ENCODE measurements at regions of chr21 and their contacts with region 1.

Region 1: GRCh38 chr21:45011911-45012660 is 62.3 kb upstream of the ADARB1 start:
- DNase-seq: peak; percentile 78
- H3K4me3 ChIP-seq: no peak overlapping the region
- H3K27ac ChIP-seq: peak overlapping the region; percentile 77
- H3K4me1 ChIP-seq: peaks cover 22% of the 10 kb centered on the region
- H3K27me3 ChIP-seq: no peaks in the 10 kb centered on the region
- CTCF ChIP-seq: peak; percentile 28 to 50
- POLR2A ChIP-seq: no peak

Region 2: DNA sequence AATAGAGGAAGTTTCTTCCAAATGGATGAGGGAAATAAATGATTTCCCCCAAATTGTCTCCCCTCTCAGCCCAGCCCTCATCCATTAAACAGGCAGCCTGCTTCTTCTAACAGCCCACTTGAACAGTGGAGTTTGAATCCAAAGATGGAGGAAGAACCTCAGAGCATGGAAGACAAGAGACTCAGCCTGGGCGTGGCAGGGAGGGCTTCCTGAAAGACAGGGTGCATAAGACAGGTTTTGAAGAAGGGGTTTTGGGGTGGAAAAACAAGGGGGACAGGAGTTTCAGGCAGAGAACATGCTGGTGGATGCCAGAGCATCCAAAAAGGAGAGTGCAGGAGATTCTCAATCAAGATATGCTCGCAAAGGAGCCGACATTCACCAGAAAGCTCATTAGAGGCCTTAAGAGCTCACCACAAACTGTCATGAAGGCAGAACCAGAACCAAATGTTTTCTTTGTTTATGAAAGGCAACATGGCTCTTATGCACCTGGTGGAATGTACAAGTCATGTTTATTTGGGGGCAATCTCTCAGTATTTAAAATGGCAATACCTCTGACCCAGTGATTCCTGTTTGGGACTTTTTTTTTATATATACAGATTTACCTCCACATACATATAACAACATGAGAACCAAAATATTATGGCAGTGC is 274.3 kb before region 1 on chr21:
- CTCF ChIA-PET with region 1: no interaction called
- POLR2A ChIA-PET with region 1: no interaction called
- dilution Hi-C with region 1: no loop called
- intact Hi-C with region 1: no loop called
- DNase-seq: no peak
- H3K4me3 ChIP-seq: no peak overlapping the region
- H3K27ac ChIP-seq: no peak overlapping the region
- H3K4me1 ChIP-seq: no peaks in the 10 kb centered on the region
- H3K27me3 ChIP-seq: peaks cover 5 to 9% of the 10 kb centered on the region in 2 experiments
- CTCF ChIP-seq: no peak
- POLR2A ChIP-seq: no peak

Region 3: DNA sequence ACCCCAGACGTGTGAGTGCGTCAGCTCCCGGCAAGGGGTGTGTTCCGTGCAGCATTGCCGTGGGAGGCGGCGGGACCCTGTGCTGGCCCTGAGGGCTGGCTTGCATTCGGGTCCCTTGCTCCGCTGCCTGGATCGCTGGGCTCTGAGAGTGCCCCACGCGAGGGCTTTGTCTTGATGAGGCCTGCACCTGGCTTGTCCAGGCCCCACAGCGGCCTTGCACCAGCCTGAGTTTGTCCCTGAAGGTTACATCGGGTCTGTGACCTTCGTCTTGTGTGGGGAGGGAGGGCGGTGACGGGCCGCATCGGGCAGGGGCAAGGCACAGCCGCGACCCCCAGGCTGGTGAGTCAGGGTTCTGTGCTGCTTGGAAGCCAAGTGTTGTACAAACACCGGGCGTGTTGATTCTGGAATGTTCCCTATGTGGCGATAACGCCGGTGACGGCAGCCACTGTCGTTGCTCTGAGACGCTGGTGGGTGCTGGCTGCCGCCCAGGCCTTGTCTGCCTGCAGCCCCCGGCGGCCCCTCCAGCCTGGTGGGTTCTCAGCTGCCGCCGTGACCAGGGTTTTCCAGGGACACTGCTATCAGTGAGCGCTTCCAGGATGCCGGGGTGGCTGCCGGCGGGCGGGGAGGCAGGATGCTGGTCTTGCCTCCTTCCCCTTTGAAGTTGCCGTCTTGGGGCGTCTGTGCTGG is 29.4 kb before region 1 on chr21:
- CTCF ChIA-PET with region 1: no interaction called
- POLR2A ChIA-PET with region 1: no interaction called
- dilution Hi-C with region 1: no loop called
- intact Hi-C with region 1: loop called (anchors 2 kb)
- DNase-seq: peak; percentile 74
- H3K4me3 ChIP-seq: no peak overlapping the region
- H3K27ac ChIP-seq: peak overlapping the region; percentile 51
- H3K4me1 ChIP-seq: peaks cover 12% of the 10 kb centered on the region
- H3K27me3 ChIP-seq: no peaks in the 10 kb centered on the region
- CTCF ChIP-seq: no peak
- POLR2A ChIP-seq: no peak

Region 4: DNA sequence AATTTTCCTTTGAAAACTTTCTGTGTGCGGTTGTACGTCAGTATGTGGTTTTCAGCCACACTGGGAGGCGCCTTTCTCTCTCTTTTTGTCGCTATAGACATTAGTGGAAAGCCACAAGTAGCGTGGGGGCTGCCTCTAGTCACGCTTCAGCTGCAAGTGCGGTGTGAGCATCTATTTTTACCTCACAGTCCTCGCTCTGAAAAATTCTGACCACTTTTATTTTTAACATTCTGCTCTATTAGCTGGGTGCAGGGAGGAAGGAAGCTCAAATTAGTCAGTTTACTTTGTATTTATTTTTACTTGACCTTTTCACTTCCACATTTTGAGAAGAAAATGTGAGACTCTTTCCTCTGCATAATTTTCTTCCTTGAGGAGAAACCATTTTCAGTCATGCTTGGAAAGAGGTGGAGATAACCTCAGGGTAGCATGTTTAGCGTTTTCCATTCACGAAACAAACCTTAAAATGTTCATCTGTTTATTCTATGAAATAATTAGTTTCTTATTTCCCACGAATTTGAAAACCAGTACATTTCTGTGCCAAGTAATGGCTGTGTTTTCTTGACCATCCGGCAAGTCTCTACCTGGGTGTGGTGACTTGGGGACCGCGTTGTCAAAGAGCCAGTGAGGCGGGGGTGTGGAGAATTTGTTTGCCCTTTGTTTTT is 97.9 kb after region 1 on chr21:
- CTCF ChIA-PET with region 1: no interaction called
- POLR2A ChIA-PET with region 1: no interaction called
- dilution Hi-C with region 1: no loop called
- intact Hi-C with region 1: no loop called
- DNase-seq: peak; percentile 56
- H3K4me3 ChIP-seq: peak overlapping the region in 2 of 3 experiments; percentile 4 to 43
- H3K27ac ChIP-seq: peak overlapping the region; percentile 85
- H3K4me1 ChIP-seq: peaks cover 31% of the 10 kb centered on the region
- H3K27me3 ChIP-seq: no peaks in the 10 kb centered on the region
- CTCF ChIP-seq: no peak
- POLR2A ChIP-seq: no peak

Measured in endothelial cell of umbilical vein (primary cell).